Astrocyte of the cerebellum (primary cell): ENCODE measurements at regions of chr17 and their contacts with region 1.

Region 1: GRCh38 chr17:29640413-29640812 is 17.7 kb upstream of the CORO6 start:
- DNase-seq: no peak
- H3K4me3 ChIP-seq: no peak overlapping the region
- CTCF ChIP-seq: no peak

Region 2: DNA sequence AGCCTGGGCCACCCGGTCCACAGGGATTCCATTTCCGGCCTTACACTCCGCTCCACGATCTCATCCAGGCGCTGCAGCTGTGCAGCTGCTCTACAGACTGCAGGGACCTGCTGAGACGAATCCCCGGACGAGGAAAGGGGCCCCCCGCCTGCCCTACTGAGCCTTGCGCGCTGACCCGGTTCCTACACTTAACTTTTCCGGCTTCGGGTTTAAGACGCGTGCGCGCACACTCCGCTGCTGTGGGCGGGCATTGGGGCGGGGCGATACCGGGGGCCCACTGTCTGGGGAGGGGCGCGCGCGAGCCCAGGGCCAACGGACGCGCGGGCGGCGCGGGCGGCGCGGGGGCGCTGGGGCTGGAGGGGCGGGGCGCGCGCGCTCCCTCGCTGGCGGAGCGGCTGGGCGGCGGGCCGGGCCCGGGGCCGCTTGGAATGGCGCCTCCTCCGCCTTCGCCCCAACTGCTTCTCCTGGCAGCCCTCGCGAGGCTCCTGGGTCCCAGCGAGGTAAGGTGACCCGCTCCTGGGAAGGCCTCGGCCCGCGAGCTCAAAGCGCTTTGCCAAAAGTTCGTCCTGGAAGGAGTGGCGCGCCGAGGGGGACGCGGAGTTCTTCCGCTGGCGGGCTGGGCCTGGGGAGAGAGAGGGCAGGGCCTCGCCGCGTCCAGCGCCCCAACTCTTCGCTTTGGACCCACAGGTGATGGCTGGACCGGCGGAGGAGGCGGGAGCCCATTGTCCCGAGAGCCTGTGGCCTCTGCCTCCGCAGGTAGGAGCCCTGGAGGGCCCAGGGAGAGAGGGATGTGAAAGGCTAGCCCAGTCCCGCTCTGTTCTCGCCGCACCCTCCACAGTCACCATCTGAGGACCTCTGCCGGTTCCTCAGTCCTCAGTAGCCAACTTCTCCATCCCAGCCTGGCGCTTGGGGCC is 71.8 kb before region 1 on chr17 and contains the start of gene TP53I13:
- in situ Hi-C with region 1: no loop called
- DNase-seq: no peak
- H3K4me3 ChIP-seq: peak within 1 kb of the TSS; percentile 72
- CTCF ChIP-seq: no peak

Region 3: DNA sequence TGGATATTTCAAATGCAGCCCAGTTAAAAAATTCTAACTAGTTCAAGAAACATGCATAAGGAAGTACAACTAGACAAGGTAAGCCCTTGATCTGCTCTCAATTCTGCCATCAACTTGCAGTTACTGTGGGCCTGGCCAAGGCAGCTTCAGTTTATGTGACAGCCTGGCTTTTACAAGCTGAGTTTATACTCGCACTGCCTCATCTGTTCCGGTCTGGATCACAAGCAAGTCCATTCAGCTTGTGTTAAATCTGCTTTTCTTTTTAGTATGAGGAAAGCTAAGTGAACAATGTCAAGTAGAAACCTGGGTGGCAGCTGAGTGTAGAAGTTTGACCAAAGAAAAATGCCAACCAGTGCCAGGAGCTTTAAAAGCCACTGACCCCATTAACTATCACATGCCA is 58.9 kb after region 1 on chr17:
- in situ Hi-C with region 1: no loop called
- DNase-seq: no peak
- H3K4me3 ChIP-seq: no peak overlapping the region
- CTCF ChIP-seq: no peak

Region 4: GRCh38 chr17:29777663-29778062 is 137.2 kb after region 1 on chr17:
- in situ Hi-C with region 1: loop called (anchors 5 kb)
- DNase-seq: no peak
- H3K4me3 ChIP-seq: no peak overlapping the region
- CTCF ChIP-seq: no peak